ENCODE measurements at regions of chr3 and their contacts with region 1.

Region 1: DNA sequence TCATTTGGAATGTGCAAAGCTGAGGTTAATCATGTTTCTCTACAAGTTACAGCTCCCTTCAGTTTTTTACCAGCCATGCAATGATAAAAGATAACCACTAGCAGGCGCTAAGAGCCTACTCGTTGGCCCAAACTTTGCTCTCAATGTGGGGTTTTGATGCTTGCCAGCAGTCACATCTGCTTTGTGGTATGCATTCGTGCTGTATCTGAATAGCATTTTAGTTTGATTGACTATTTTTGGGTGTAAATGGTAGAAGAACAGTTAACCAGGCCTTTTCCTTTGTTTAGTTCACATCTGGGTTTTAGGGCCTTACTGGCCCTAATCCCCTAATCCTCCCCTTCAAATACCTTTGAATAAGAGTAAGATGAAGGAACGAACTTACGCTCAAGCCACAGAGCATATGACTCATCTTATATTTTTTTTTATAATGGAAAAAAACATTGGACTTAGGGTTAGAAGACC is 4.4 kb upstream of the CLDN11 start:
- DNase-seq: peak; percentile 71
- H3K4me3 ChIP-seq: peak overlapping the region in 1 of 2 experiments; percentile 18; a peak in 1 of 4 replicates
- H3K27ac ChIP-seq: peak overlapping the region in 1 of 2 experiments; percentile 22; a peak in 2 of 4 replicates
- H3K4me1 ChIP-seq: peaks cover 0 to 6% of the 10 kb centered on the region in 2 experiments; a peak in 1 of 4 replicates
- H3K27me3 ChIP-seq: no peaks in the 10 kb centered on the region
- CTCF ChIP-seq: peak; percentile 99
- EP300 ChIP-seq: peak in 1 of 2 experiments; percentile 28; a peak in 1 of 4 replicates
- RAD21 ChIP-seq: peak; percentile 100

Region 2: GRCh38 chr3:170128977-170129431 is 285.2 kb before region 1 on chr3:
- CTCF ChIA-PET with region 1: no interaction called
- POLR2A ChIA-PET with region 1: no interaction called
- DNase-seq: no peak
- H3K4me3 ChIP-seq: no peak overlapping the region
- H3K27ac ChIP-seq: no peak overlapping the region
- H3K4me1 ChIP-seq: no peaks in the 10 kb centered on the region; a peak in 2 of 4 replicates
- H3K27me3 ChIP-seq: no peaks in the 10 kb centered on the region
- CTCF ChIP-seq: no peak
- EP300 ChIP-seq: no peak
- RAD21 ChIP-seq: no peak

Region 3: DNA sequence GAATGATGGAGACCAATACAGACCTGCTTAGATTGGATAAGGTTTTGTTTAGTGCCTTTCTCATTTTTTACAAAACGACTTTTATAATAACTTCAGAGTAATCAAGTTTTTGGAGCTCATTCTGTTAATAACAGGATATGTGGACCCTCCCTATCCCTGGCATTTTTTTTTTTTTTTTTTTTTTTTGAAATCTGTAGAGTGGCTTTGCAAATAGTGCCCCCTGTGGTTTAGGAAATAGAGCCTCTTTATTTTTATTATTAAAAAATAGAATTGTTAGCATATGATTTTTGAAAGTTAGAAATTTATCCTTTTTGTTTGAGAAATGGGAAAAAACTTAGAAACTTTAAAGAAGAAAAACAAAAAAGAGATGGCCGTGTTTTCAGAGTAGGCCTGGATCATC is 45.3 kb before region 1 on chr3:
- CTCF ChIA-PET with region 1: interaction called, 14 read pairs
- POLR2A ChIA-PET with region 1: no interaction called
- DNase-seq: peak; percentile 45
- H3K4me3 ChIP-seq: no peak overlapping the region
- H3K27ac ChIP-seq: no peak overlapping the region
- H3K4me1 ChIP-seq: peaks cover 0 to 3% of the 10 kb centered on the region in 2 experiments; a peak in 3 of 4 replicates
- H3K27me3 ChIP-seq: no peaks in the 10 kb centered on the region
- CTCF ChIP-seq: peak; percentile 58
- EP300 ChIP-seq: no peak
- RAD21 ChIP-seq: peak; percentile 47

Region 4: GRCh38 chr3:170425491-170426239 is 11.4 kb after region 1 on chr3:
- CTCF ChIA-PET with region 1: interaction called, 11 read pairs
- POLR2A ChIA-PET with region 1: no interaction called
- DNase-seq: peak; percentile 44
- H3K4me3 ChIP-seq: no peak overlapping the region
- H3K27ac ChIP-seq: peak overlapping the region in 1 of 2 experiments; percentile 48; a peak in 2 of 4 replicates
- H3K4me1 ChIP-seq: peaks cover 0 to 12% of the 10 kb centered on the region in 2 experiments; a peak in 3 of 4 replicates
- H3K27me3 ChIP-seq: no peaks in the 10 kb centered on the region
- CTCF ChIP-seq: no peak
- EP300 ChIP-seq: no peak
- RAD21 ChIP-seq: no peak

Region 5: DNA sequence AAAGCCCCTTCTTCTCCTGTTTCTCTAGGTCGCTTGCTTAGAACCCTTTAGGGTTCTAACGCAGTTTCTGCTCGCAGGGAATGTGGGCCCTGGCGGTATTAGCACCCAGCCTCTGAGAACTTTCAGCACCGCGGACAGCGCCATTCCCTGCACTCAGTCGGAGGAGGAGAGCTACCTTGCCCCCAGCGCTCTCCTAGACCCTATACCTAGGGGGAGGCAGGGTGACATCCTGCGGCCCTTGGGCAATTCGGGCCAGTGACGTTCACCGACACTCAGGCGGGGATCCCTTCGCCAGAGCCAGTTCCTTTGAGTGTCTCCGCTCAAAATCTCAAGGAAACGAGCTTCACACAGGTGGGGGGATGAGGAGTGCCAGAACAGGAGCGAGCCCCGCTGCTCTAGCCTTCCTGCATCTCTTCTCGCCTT is 170.4 kb after region 1 on chr3:
- CTCF ChIA-PET with region 1: interaction called, 19 read pairs
- POLR2A ChIA-PET with region 1: no interaction called
- DNase-seq: peak; percentile 42
- H3K4me3 ChIP-seq: peak overlapping the region; percentile 61 to 64
- H3K27ac ChIP-seq: no peak overlapping the region
- H3K4me1 ChIP-seq: peaks cover 0 to 11% of the 10 kb centered on the region in 2 experiments; a peak in 2 of 4 replicates
- H3K27me3 ChIP-seq: no peaks in the 10 kb centered on the region
- CTCF ChIP-seq: no peak
- EP300 ChIP-seq: no peak
- RAD21 ChIP-seq: no peak

Region 6: DNA sequence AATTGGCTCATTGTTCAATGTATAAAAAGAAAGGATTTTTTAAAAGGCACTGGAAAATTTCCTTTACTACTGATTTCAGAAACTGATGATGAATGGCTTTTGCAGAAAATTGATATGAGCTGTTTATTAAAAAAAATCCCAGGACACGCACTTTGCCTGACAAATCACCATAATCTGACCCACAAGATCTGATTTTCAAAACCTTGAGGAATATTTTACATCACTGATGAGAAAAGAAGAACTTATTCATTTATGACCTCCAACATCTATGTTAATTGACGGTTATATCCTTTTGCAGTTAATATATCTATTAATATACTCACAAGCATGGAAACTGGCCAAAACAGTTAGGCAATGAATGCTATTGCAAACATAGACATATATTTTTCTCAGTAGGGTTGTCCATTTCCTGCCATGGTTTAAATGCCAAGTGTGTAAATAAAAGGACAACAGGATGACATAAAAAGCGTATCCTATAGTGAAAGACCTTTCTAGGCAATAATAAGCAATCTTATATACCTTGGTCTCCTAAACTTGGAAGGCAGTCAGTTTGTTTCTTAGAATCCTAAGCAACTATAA is 281.3 kb after region 1 on chr3:
- CTCF ChIA-PET with region 1: interaction called, 75 read pairs
- POLR2A ChIA-PET with region 1: no interaction called
- DNase-seq: no peak
- H3K4me3 ChIP-seq: no peak overlapping the region
- H3K27ac ChIP-seq: no peak overlapping the region
- H3K4me1 ChIP-seq: peaks cover 0 to 7% of the 10 kb centered on the region in 2 experiments; a peak in 1 of 4 replicates
- H3K27me3 ChIP-seq: no peaks in the 10 kb centered on the region
- CTCF ChIP-seq: no peak
- EP300 ChIP-seq: no peak
- RAD21 ChIP-seq: no peak

Measured in SK-N-SH (cell line).